Left cardiac atrium (tissue), 4 donors: ENCODE measurements at regions of chr15 and their contacts with region 1.

Region 1: GRCh38 chr15:38817427-38818156 is 253.0 kb upstream of the RASGRP1 start:
- DNase-seq: peak; percentile 81
- ATAC-seq: peak; percentile 89 to 93

Region 2: DNA sequence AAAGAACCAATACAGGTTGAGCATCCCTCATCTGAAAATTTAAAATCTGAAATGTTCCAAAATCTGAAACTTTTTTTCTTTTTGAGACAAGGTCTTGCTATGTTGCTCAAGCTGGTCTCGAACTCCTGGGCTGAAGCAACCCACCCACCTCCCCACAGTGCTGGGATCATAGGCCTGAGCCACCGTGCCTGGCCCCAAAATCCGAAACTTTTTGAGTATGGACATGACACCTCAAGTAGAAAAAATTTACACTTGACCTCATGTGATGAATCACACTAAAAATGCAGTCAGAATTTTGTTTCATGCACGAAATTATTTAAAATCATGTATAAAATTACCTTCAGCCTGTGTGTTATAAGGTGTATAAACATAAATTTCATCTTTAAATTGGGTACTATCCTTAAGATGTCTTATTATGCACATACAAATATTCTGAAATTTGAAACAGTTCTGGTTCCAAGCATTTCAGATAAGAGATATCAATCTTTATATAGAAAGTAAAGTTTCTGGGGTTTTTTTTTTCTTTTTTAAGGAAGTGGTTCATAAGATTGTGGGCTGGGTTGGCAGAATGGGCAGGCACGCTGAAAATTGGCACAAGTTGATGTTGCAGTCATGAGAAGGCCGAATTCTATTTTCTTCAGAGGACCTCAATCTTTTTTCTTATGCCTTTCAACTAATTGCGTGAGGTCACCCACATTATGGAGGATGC is 492.5 kb before region 1 on chr15:
- intact Hi-C with region 1: no loop called
- DNase-seq: no peak
- ATAC-seq: no peak

Region 3: GRCh38 chr15:38920966-38921365 is 103.4 kb after region 1 on chr15:
- intact Hi-C with region 1: no loop called
- DNase-seq: no peak
- ATAC-seq: no peak

Region 4: DNA sequence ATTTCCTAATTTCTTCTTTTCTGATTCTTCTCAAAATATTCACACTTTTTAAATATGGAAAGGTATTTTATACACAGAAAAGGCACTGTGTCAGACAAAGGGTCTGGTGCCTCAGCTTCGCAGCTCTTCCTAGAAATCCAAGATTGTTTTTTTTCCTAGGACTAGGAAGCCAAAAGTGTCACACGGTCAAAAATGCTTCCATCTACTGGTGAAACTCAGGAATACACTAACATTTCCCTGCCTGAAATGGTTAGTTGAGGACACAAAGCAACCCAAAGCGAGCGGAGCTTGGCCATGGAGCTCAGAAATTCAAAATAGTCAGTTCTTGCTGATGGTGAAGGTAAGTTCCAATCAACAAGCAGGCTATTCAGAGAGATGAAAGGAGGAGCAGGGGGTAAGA is 173.5 kb after region 1 on chr15:
- intact Hi-C with region 1: loop called in 1 of 2 experiments (anchors 5 kb)
- DNase-seq: no peak
- ATAC-seq: peak in 1 of 2 donors; percentile 52

Region 5: DNA sequence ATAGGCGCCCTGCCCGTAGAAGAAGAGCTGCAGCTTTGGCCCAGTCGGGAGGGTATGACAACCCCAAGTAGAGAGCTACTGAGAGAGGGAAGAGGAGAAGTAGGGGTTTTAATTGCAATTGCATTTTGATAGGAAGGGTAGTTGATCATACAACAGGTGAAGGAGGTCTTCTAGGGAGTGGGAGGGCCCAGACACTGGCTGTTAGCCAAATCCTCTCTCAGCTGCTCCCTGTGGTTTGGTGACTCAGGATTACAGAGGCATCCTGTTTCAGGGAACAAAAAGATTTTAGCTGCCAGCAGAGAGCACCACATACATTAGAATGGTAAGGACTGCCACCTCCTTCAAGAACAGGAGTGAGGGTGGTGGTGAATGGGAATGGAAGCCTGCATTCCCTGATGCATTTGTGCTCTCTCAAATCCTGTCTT is 354.4 kb after region 1 on chr15:
- intact Hi-C with region 1: loop called in 1 of 2 experiments (anchors 5 kb)
- DNase-seq: peak; percentile 42
- ATAC-seq: peak; percentile 83 to 96

Region 6: GRCh38 chr15:39756806-39757522 is 939.4 kb after region 1 on chr15:
- intact Hi-C with region 1: loop called in 1 of 2 experiments (anchors 5 kb)
- DNase-seq: no peak
- ATAC-seq: no peak